CD8-positive, alpha-beta T cell (primary cell): ENCODE measurements at regions of chr19 and their contacts with region 1.

Region 1: DNA sequence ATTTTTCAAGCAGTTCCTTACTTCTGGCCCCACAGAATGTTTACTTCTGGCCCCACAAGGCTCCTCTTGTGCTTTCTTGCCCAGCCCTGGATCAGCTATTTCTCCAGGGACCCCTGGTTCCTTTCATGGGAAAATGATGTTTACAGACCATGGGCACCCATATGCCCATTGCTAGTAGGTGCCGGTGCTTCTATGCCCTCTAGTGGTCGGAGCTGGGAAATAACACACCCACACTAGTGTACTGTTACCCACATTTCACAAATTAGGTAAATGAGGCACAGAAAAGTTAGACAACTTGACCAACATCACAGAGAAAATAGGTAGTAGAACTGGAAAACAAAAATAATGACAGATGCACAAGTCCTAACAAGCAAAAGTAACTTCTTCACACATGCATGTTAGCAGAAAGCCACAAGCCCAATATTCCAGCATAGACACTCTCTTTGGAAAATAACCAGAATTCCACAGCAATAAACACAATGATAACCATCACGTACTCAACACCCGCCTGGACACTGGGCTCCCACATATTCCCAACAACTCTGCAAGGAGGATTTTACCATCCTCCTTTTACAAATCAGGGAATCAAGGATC is 1.3 kb upstream of the CEACAM6 start:
- DNase-seq: peak; percentile 46 to 78 (median 72)
- ATAC-seq: peak; percentile 94
- H3K4me3 ChIP-seq: no peak overlapping the region
- H3K4me3 Mint-ChIP-seq: no peak overlapping the region
- H3K27ac ChIP-seq: no peak overlapping the region
- H3K27ac Mint-ChIP-seq: no peak overlapping the region
- H3K4me1 ChIP-seq: no peaks in the 10 kb centered on the region
- H3K4me1 Mint-ChIP-seq: peaks cover 3% of the 10 kb centered on the region
- H3K27me3 ChIP-seq: peaks cover 0 to 3% of the 10 kb centered on the region in 2 experiments
- H3K27me3 Mint-ChIP-seq: peaks cover 31% of the 10 kb centered on the region
- CTCF ChIP-seq: peak; percentile 69

Region 2: GRCh38 chr19:41775360-41775695 is 21.3 kb after region 1 on chr19:
- CTCF ChIA-PET with region 1: interaction called, 312 read pairs
- POLR2A ChIA-PET with region 1: interaction called, 3 read pairs
- intact Hi-C with region 1: loop called in 1 of 2 experiments (anchors 2 kb)
- DNase-seq: no peak
- ATAC-seq: no peak
- H3K4me3 ChIP-seq: no peak overlapping the region
- H3K4me3 Mint-ChIP-seq: no peak overlapping the region
- H3K27ac ChIP-seq: no peak overlapping the region
- H3K27ac Mint-ChIP-seq: no peak overlapping the region
- H3K4me1 ChIP-seq: peaks cover 32% of the 10 kb centered on the region
- H3K4me1 Mint-ChIP-seq: peaks cover 37% of the 10 kb centered on the region
- H3K27me3 ChIP-seq: peaks cover 6 to 10% of the 10 kb centered on the region in 2 experiments
- H3K27me3 Mint-ChIP-seq: peaks cover 70% of the 10 kb centered on the region
- CTCF ChIP-seq: no peak

Region 3: GRCh38 chr19:41801792-41802211 is 47.8 kb after region 1 on chr19:
- CTCF ChIA-PET with region 1: interaction called, 70 read pairs
- POLR2A ChIA-PET with region 1: no interaction called
- intact Hi-C with region 1: no loop called
- DNase-seq: no peak
- ATAC-seq: no peak
- H3K4me3 ChIP-seq: no peak overlapping the region
- H3K4me3 Mint-ChIP-seq: no peak overlapping the region
- H3K27ac ChIP-seq: no peak overlapping the region
- H3K27ac Mint-ChIP-seq: no peak overlapping the region
- H3K4me1 ChIP-seq: no peaks in the 10 kb centered on the region
- H3K4me1 Mint-ChIP-seq: peaks cover 12% of the 10 kb centered on the region
- H3K27me3 ChIP-seq: no peaks in the 10 kb centered on the region
- H3K27me3 Mint-ChIP-seq: peaks cover 2% of the 10 kb centered on the region
- CTCF ChIP-seq: no peak

Region 4: GRCh38 chr19:41821003-41821735 is 67.1 kb after region 1 on chr19:
- CTCF ChIA-PET with region 1: interaction called, 6 read pairs
- POLR2A ChIA-PET with region 1: no interaction called
- intact Hi-C with region 1: loop called in 1 of 2 experiments (anchors 2 kb)
- DNase-seq: peak in 8 of 9 experiments; percentile 6 to 69 (median 44)
- ATAC-seq: peak; percentile 82
- H3K4me3 ChIP-seq: no peak overlapping the region
- H3K4me3 Mint-ChIP-seq: no peak overlapping the region
- H3K27ac ChIP-seq: no peak overlapping the region
- H3K27ac Mint-ChIP-seq: no peak overlapping the region
- H3K4me1 ChIP-seq: no peaks in the 10 kb centered on the region
- H3K4me1 Mint-ChIP-seq: no peaks in the 10 kb centered on the region
- H3K27me3 ChIP-seq: peaks cover 0 to 2% of the 10 kb centered on the region in 2 experiments
- H3K27me3 Mint-ChIP-seq: peaks cover 18% of the 10 kb centered on the region
- CTCF ChIP-seq: peak; percentile 42